Activated CD4-positive, alpha-beta memory T cell treated with anti-CD3 and anti-CD28 coated beads for 36 hours (primary cell): ENCODE measurements at regions of chr11 and their contacts with region 1.

Region 1: GRCh38 chr11:10857709-10858438 is at the start of gene ZBED5:
- DNase-seq: peak; percentile 98
- H3K4me3 Mint-ChIP-seq: peak within 1 kb of the TSS; percentile 97
- H3K27ac Mint-ChIP-seq: peak within 1 kb of the TSS; percentile 99
- H3K4me1 Mint-ChIP-seq: peaks cover 33% of the 10 kb centered on the region
- H3K27me3 Mint-ChIP-seq: no peaks in the 10 kb centered on the region
- total RNA-seq, gene ZBED5: 39.8 to 43.3 TPM

Region 2: GRCh38 chr11:10447445-10447844 is 410.4 kb before region 1 on chr11:
- CTCF ChIA-PET with region 1: no interaction called
- POLR2A ChIA-PET with region 1: no interaction called
- intact Hi-C with region 1: no loop called
- DNase-seq: no peak
- H3K4me3 Mint-ChIP-seq: no peak overlapping the region
- H3K27ac Mint-ChIP-seq: no peak overlapping the region
- H3K4me1 Mint-ChIP-seq: peaks cover 40% of the 10 kb centered on the region
- H3K27me3 Mint-ChIP-seq: no peaks in the 10 kb centered on the region

Region 3: GRCh38 chr11:10701982-10702381 is 155.9 kb before region 1 on chr11:
- CTCF ChIA-PET with region 1: no interaction called
- POLR2A ChIA-PET with region 1: no interaction called
- intact Hi-C with region 1: no loop called
- DNase-seq: no peak
- H3K4me3 Mint-ChIP-seq: no peak overlapping the region
- H3K27ac Mint-ChIP-seq: no peak overlapping the region
- H3K4me1 Mint-ChIP-seq: no peaks in the 10 kb centered on the region
- H3K27me3 Mint-ChIP-seq: peaks cover 2% of the 10 kb centered on the region

Region 4: GRCh38 chr11:10750838-10751580 is 106.9 kb before region 1 on chr11 and contains the start of gene CTR9:
- CTCF ChIA-PET with region 1: no interaction called
- POLR2A ChIA-PET with region 1: no interaction called
- intact Hi-C with region 1: loop called (anchors 2 kb)
- DNase-seq: peak; percentile 96
- H3K4me3 Mint-ChIP-seq: peak within 1 kb of the TSS; percentile 93
- H3K27ac Mint-ChIP-seq: peak within 1 kb of the TSS; percentile 89
- H3K4me1 Mint-ChIP-seq: peaks cover 25% of the 10 kb centered on the region
- H3K27me3 Mint-ChIP-seq: no peaks in the 10 kb centered on the region
- total RNA-seq, gene CTR9: 37.6 to 39.9 TPM

Region 5: GRCh38 chr11:10878408-10879214 is 20.7 kb after region 1 on chr11:
- CTCF ChIA-PET with region 1: interaction called, 10 read pairs
- POLR2A ChIA-PET with region 1: interaction called, 4 read pairs
- intact Hi-C with region 1: no loop called
- DNase-seq: no peak
- H3K4me3 Mint-ChIP-seq: no peak overlapping the region
- H3K27ac Mint-ChIP-seq: no peak overlapping the region
- H3K4me1 Mint-ChIP-seq: peaks cover 11% of the 10 kb centered on the region
- H3K27me3 Mint-ChIP-seq: no peaks in the 10 kb centered on the region

Region 6: DNA sequence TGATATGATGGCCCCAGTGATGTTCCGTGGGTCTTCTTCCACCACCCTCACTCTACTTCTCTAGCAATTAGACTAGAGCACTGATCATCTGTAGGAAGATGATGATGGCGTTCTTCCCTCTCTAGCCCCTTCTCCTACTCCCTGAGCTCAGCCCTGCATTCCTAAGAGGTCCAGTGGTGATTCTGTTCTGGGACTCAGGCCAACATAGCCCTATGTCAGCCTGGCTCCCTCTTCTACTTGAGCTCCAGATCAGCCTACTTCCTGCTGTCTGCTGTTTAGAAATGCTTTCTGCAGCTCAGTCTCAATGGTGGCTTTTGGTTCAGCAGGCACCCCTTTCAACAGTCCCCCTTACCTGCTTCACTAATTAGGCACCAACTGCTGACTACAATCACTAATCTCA is 86.1 kb after region 1 on chr11:
- CTCF ChIA-PET with region 1: no interaction called
- POLR2A ChIA-PET with region 1: no interaction called
- intact Hi-C with region 1: no loop called
- DNase-seq: no peak
- H3K4me3 Mint-ChIP-seq: no peak overlapping the region
- H3K27ac Mint-ChIP-seq: no peak overlapping the region
- H3K4me1 Mint-ChIP-seq: no peaks in the 10 kb centered on the region
- H3K27me3 Mint-ChIP-seq: peaks cover 5% of the 10 kb centered on the region